ENCODE measurements at regions of chr12 and their contacts with region 1.

Region 1: GRCh38 chr12:71746983-71747611 is 7.6 kb upstream of the RAB21 start:
- DNase-seq: peak; percentile 9 to 79 (median 36)
- ATAC-seq: peak; percentile 99
- H3K4me3 ChIP-seq: no peak overlapping the region
- H3K4me3 Mint-ChIP-seq: no peak overlapping the region
- H3K27ac ChIP-seq: no peak overlapping the region
- H3K27ac Mint-ChIP-seq: no peak overlapping the region
- H3K4me1 ChIP-seq: no peaks in the 10 kb centered on the region
- H3K4me1 Mint-ChIP-seq: no peaks in the 10 kb centered on the region
- H3K27me3 ChIP-seq: peaks cover 0 to 9% of the 10 kb centered on the region in 2 experiments
- H3K27me3 Mint-ChIP-seq: peaks cover 32% of the 10 kb centered on the region
- CTCF ChIP-seq: peak; percentile 86

Region 2: DNA sequence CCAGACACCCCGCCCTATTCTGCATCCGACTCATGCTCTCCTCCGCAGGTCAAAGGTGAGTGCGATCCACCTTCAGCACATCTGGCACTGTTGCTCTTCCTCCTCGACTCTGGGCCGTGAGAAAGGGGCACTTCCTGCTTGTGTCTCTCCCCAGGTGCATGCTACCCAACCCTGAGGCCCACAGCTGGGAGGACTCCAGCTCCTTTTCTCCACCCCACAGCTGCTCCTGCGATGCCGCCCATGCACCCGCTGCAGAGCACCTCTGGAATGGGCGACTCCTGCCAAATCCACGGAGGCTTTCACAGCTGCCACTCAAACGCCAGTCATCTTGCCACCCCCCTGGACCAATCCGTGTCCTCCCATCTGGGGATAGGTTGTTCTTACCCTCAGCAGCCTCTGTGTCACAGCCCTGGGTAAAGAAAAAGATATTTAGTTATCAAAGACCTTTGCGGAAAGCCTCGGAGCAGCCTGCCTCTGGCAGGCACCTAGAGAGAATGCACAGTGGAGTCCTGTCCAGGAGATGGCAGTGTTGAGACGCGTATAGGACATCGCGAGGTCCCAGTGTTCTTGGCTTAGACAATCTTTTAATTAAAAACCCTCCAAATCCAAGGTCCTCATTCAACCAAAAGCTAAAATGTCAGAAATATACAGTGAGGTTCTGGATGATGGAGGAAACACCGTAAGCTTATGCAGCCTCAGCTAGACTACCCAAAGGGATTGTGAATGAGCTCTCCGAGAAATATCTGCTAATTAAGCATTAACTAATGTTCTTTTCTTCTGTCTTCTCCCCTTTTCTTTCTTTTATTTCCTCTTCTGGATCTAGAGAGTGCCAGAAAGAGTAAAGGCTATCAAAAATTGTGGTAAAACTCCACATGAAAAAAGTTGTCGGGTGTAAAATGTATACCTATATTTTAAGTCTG is 1867.8 kb before region 1 on chr12:
- CTCF ChIA-PET with region 1: interaction called, 3 read pairs
- POLR2A ChIA-PET with region 1: no interaction called
- intact Hi-C with region 1: loop called in 1 of 2 experiments (anchors 10 kb)
- DNase-seq: peak; percentile 36 to 78 (median 52)
- ATAC-seq: peak; percentile 92
- H3K4me3 ChIP-seq: no peak overlapping the region
- H3K4me3 Mint-ChIP-seq: no peak overlapping the region
- H3K27ac ChIP-seq: no peak overlapping the region
- H3K27ac Mint-ChIP-seq: no peak overlapping the region
- H3K4me1 ChIP-seq: no peaks in the 10 kb centered on the region
- H3K4me1 Mint-ChIP-seq: peaks cover 7% of the 10 kb centered on the region
- H3K27me3 ChIP-seq: peaks cover 0 to 2% of the 10 kb centered on the region in 2 experiments
- H3K27me3 Mint-ChIP-seq: peaks cover 45% of the 10 kb centered on the region
- CTCF ChIP-seq: peak; percentile 88

Region 3: DNA sequence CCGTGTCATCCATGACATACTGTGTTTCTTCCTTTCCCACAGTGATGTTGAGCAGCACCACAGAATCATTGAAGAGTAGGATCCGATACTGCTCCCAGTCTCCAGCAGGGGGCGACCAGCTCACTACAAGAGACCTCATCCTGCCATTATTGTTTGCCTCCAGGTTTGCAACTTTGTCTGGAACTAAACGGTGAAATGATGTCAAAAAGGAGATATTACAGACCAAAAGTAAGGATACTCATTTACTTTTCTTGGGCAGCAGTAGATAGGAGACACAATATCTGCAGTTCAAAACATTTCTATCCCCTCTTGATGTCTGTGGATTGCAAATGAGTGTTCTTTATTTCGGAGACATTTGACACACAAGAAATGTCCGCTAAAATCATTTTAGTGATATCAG is 1157.0 kb before region 1 on chr12:
- CTCF ChIA-PET with region 1: interaction called, 3 read pairs
- POLR2A ChIA-PET with region 1: no interaction called
- intact Hi-C with region 1: loop called (anchors 5 to 10 kb)
- DNase-seq: peak; percentile 7 to 60 (median 32)
- ATAC-seq: peak; percentile 73
- H3K4me3 ChIP-seq: no peak overlapping the region
- H3K4me3 Mint-ChIP-seq: no peak overlapping the region
- H3K27ac ChIP-seq: no peak overlapping the region
- H3K27ac Mint-ChIP-seq: no peak overlapping the region
- H3K4me1 ChIP-seq: no peaks in the 10 kb centered on the region
- H3K4me1 Mint-ChIP-seq: no peaks in the 10 kb centered on the region
- H3K27me3 ChIP-seq: peaks cover 0 to 5% of the 10 kb centered on the region in 2 experiments
- H3K27me3 Mint-ChIP-seq: peaks cover 33% of the 10 kb centered on the region
- CTCF ChIP-seq: peak; percentile 75

Region 4: DNA sequence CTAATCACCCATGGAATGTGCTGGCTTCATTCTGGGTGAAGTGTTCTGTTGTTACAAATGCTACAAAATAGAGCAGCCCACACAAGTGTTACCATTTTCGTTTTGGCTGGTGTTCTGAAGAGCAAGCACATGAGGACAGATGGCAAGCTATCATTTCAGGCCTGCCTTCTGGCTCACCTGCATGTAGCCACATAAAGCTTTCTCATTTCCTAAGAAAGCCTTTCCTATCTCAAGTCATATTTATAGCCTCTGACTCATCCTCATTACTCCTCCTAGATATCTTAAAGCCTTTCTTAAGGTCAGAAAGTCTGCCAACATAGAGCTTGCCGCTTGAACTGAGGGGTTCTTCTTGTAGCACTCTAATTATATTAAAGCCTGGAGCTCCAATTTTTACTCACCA is 915.6 kb before region 1 on chr12:
- CTCF ChIA-PET with region 1: no interaction called
- POLR2A ChIA-PET with region 1: no interaction called
- intact Hi-C with region 1: no loop called
- DNase-seq: no peak
- ATAC-seq: no peak
- H3K4me3 ChIP-seq: no peak overlapping the region
- H3K4me3 Mint-ChIP-seq: no peak overlapping the region
- H3K27ac ChIP-seq: no peak overlapping the region
- H3K27ac Mint-ChIP-seq: no peak overlapping the region
- H3K4me1 ChIP-seq: no peaks in the 10 kb centered on the region
- H3K4me1 Mint-ChIP-seq: no peaks in the 10 kb centered on the region
- H3K27me3 ChIP-seq: no peaks in the 10 kb centered on the region
- H3K27me3 Mint-ChIP-seq: no peaks in the 10 kb centered on the region
- CTCF ChIP-seq: no peak

Region 5: DNA sequence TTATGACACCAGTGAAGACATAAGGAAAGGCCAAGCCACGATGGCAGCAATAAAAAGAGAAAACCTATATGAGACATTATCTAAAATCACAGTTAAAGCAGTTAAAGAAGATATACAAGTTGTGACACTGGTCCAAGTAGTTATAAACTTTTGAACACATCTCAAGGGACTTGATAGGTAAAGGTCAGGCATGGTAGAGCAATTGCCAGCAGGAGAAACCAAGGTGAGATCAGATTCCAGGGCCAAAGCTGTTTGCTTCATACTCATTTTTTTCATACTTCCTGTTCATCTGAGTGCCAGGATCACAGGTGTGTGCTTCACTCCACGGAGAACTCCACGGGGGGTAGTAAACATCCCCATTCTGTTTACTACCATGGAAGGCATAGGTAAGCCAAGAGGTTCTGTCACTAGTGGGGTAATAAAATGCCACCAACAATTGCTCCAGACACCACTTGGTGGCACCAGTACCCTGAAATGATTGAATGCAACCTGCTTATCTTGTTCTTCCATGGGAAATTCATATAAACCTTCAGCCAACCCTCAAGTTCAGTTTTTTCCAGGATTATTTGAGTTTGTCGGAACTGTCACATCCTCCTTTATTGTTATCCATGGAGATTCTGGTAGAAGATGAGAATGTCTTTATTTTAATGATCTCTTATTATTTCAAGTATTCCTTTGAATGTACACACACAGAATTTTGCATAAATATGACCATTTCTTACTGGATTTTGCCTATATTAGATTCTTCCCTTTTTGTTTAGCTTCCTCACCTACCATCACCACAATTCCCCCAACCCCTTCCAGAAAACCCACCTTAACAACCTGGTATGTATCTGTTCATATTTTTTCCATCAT is 530.1 kb before region 1 on chr12:
- CTCF ChIA-PET with region 1: no interaction called
- POLR2A ChIA-PET with region 1: no interaction called
- intact Hi-C with region 1: loop called (anchors 5 kb)
- DNase-seq: no peak
- ATAC-seq: no peak
- H3K4me3 ChIP-seq: no peak overlapping the region
- H3K4me3 Mint-ChIP-seq: no peak overlapping the region
- H3K27ac ChIP-seq: no peak overlapping the region
- H3K27ac Mint-ChIP-seq: no peak overlapping the region
- H3K4me1 ChIP-seq: no peaks in the 10 kb centered on the region
- H3K4me1 Mint-ChIP-seq: no peaks in the 10 kb centered on the region
- H3K27me3 ChIP-seq: no peaks in the 10 kb centered on the region
- H3K27me3 Mint-ChIP-seq: no peaks in the 10 kb centered on the region
- CTCF ChIP-seq: peak; percentile 9

Region 6: GRCh38 chr12:71636704-71637115 is 110.4 kb before region 1 on chr12:
- CTCF ChIA-PET with region 1: interaction called, 14 read pairs
- POLR2A ChIA-PET with region 1: interaction called, 3 read pairs
- intact Hi-C with region 1: loop called (anchors 2 kb)
- DNase-seq: peak in 3 of 14 experiments; percentile 65 to 78 (median 77)
- ATAC-seq: peak; percentile 79
- H3K4me3 ChIP-seq: no peak overlapping the region
- H3K4me3 Mint-ChIP-seq: no peak overlapping the region
- H3K27ac ChIP-seq: no peak overlapping the region
- H3K27ac Mint-ChIP-seq: peak overlapping the region; percentile 5
- H3K4me1 ChIP-seq: no peaks in the 10 kb centered on the region
- H3K4me1 Mint-ChIP-seq: peaks cover 27% of the 10 kb centered on the region
- H3K27me3 ChIP-seq: no peaks in the 10 kb centered on the region
- H3K27me3 Mint-ChIP-seq: no peaks in the 10 kb centered on the region
- CTCF ChIP-seq: peak; percentile 89

Region 7: DNA sequence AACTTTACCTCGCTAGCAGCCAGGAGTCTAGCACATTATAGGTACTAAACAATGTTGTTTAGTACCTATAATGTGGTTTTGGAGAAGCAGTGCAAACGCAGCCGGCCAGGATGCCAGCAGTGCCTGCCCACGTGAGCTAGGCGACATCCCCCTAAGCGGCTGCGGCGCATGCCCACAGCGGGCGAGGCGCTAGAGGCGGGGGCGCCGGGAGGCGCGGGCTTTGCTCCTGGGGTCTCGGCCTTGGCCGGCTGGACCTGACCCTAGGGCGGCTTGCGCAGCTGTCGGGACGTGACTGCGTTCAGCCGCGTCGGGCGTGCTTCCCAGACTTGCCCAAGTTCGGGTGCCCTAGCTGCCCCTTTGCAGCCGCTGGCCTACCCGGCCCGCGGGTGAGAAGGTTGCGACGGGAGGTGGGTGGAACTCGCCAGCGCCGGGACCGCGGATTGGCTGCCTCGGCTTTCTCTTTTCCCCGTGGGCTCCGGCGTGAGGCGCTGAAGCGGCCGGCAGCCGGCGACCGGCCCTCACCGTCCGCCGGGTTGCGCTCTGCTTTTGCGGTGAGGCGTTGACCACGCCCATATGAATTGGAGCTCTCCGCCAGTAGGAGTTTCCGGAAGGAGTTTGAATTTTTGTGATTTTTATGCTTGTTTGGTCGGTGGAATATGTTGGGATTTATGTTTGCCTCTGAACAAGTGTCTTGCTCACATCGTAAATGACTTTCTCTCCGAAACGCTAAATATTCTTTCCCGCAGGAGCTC is 61.0 kb before region 1 on chr12 and contains the start of gene TMEM19:
- CTCF ChIA-PET with region 1: interaction called, 11 read pairs
- POLR2A ChIA-PET with region 1: interaction called, 9 read pairs
- intact Hi-C with region 1: loop called (anchors 2 to 5 kb)
- DNase-seq: peak; percentile 64 to 91 (median 79)
- ATAC-seq: peak; percentile 90
- H3K4me3 ChIP-seq: peak within 1 kb of the TSS; percentile 77
- H3K4me3 Mint-ChIP-seq: peak within 1 kb of the TSS; percentile 92
- H3K27ac ChIP-seq: peak within 1 kb of the TSS; percentile 69 to 78
- H3K27ac Mint-ChIP-seq: peak within 1 kb of the TSS; percentile 87
- H3K4me1 ChIP-seq: peaks cover 20% of the 10 kb centered on the region
- H3K4me1 Mint-ChIP-seq: peaks cover 47% of the 10 kb centered on the region
- H3K27me3 ChIP-seq: no peaks in the 10 kb centered on the region
- H3K27me3 Mint-ChIP-seq: no peaks in the 10 kb centered on the region
- CTCF ChIP-seq: no peak
- total RNA-seq, gene TMEM19: 8.9 to 11.6 TPM